MCF 10A (cell line): ENCODE measurements at regions of chr5 and their contacts with region 1.

Region 1: DNA sequence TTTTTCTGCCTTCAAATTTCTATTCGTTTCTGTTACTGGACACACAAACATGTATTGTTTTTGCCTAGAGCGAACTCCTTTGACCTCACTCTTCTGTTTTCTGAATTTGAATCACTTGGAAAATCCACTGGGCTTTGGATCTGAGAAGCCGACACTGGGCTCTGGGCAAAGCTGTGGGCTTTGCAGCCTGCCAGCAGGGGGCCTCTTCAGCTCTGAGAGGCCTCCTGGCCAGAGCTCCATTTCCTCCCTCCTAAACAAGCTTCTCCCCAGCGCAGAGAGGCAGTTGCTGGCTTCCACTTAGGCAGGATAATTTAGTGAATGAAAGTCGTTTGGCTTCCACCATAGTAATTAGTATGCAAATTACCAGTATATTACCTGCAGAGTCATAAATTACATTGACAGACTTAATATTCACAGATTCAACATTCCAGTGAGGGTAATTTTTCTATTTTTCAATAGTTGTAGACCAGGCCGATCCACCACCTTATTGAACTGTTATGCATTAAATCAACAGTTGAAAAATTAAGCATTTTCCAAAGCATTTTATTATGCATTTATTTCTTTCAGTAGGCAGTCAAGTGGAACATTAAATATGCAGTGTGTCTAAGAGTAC is 104.0 kb upstream of the ZNF366 start:
- DNase-seq: peak; percentile 78
- H3K4me3 Mint-ChIP-seq: no peak overlapping the region
- H3K27ac Mint-ChIP-seq: no peak overlapping the region
- H3K4me1 Mint-ChIP-seq: peaks cover 3% of the 10 kb centered on the region
- H3K27me3 Mint-ChIP-seq: no peaks in the 10 kb centered on the region
- CTCF ChIP-seq: peak; percentile 86

Region 2: DNA sequence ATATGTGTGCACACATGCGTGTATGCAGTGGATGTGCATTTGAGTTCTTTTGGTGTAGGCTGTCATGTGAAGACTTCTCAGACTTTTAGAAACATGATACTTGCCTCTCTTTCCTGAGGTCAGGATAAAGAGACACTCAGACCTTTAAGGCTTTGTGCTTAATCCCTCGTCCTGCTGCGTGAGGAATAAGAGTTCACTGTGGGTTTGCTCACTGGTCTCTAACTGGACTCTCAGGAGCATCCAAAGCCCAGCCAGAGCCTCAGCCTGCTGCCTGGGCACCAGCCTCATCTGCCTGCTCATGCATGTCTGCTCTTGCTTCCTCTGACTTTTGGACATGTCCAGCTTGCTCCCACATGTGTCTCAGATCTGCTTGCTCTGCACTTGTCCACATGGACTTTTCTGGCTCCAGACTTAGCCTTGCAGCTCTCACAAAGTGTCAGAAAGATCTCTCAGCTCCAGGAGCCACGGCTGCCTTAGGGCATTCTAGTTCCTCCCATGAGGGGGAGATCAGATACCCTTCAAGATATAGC is 38.9 kb before region 1 on chr5:
- CTCF ChIA-PET with region 1: no interaction called
- POLR2A ChIA-PET with region 1: no interaction called
- intact Hi-C with region 1: no loop called
- DNase-seq: peak; percentile 24
- H3K4me3 Mint-ChIP-seq: no peak overlapping the region
- H3K27ac Mint-ChIP-seq: no peak overlapping the region
- H3K4me1 Mint-ChIP-seq: peaks cover 9% of the 10 kb centered on the region
- H3K27me3 Mint-ChIP-seq: no peaks in the 10 kb centered on the region
- CTCF ChIP-seq: no peak

Region 3: DNA sequence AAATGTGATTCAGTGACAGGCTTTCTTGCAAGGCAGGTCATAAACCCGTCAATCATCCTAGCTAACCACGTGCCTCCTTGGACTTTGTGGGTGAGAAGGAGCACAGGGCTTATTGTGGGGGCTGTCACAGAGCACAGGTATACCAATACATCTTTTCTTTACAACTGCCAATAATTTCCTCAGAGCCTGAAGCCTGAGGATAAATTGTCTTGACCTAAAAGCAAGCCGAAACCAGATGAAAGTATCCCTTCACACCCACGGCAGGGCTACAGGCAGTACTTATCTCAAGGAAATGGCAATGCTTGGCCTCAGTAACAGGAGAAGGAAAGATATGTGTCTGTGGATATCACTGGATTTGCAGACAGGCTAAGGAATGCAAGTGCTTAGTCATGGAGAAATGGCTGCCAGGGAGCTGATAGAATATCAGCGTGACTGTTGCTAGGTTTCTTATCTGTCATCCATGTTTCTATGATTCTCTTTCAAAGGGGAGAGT is 13.7 kb before region 1 on chr5:
- CTCF ChIA-PET with region 1: interaction called, 23 read pairs
- POLR2A ChIA-PET with region 1: interaction called, 4 read pairs
- intact Hi-C with region 1: no loop called
- DNase-seq: peak; percentile 49
- H3K4me3 Mint-ChIP-seq: no peak overlapping the region
- H3K27ac Mint-ChIP-seq: no peak overlapping the region
- H3K4me1 Mint-ChIP-seq: peaks cover 19% of the 10 kb centered on the region
- H3K27me3 Mint-ChIP-seq: no peaks in the 10 kb centered on the region
- CTCF ChIP-seq: no peak

Region 4: GRCh38 chr5:72630081-72630480 is 18.9 kb after region 1 on chr5:
- CTCF ChIA-PET with region 1: interaction called, 10 read pairs
- POLR2A ChIA-PET with region 1: interaction called, 4 read pairs
- intact Hi-C with region 1: no loop called
- DNase-seq: no peak
- H3K4me3 Mint-ChIP-seq: no peak overlapping the region
- H3K27ac Mint-ChIP-seq: no peak overlapping the region
- H3K4me1 Mint-ChIP-seq: peaks cover 5% of the 10 kb centered on the region
- H3K27me3 Mint-ChIP-seq: no peaks in the 10 kb centered on the region
- CTCF ChIP-seq: no peak